CD8-positive, alpha-beta T cell (primary cell): ENCODE measurements at regions of chr1 and their contacts with region 1.

Region 1: DNA sequence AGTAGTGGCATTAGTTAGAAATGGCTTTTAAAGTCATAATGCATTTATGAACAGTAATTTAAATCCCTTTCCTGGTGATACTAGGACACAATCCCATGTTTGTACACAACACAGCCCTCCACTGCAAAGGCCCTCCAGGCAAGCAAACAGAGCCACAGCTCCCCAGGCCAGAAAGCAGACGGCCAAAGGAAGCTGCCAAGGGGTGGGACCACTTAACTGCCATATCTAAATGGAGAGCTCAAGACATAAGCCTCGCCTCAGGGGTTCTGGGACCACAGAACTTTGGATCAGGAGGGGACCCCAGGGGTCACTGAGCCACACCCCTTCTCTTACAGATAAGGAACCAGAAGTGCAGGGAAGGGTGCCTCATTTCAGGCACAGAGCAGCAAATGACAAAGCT is 189.7 kb downstream of the KCNH1 start:
- DNase-seq: no peak
- ATAC-seq: no peak
- H3K4me3 ChIP-seq: no peak overlapping the region
- H3K4me3 Mint-ChIP-seq: no peak overlapping the region
- H3K27ac ChIP-seq: no peak overlapping the region
- H3K27ac Mint-ChIP-seq: no peak overlapping the region
- H3K4me1 ChIP-seq: no peaks in the 10 kb centered on the region
- H3K4me1 Mint-ChIP-seq: peaks cover 9% of the 10 kb centered on the region
- H3K27me3 ChIP-seq: no peaks in the 10 kb centered on the region
- H3K27me3 Mint-ChIP-seq: peaks cover 6% of the 10 kb centered on the region
- CTCF ChIP-seq: no peak

Region 2: GRCh38 chr1:210407207-210407886 is 536.9 kb before region 1 on chr1:
- CTCF ChIA-PET with region 1: interaction called, 3 read pairs
- POLR2A ChIA-PET with region 1: no interaction called
- intact Hi-C with region 1: loop called (anchors 2 to 5 kb)
- DNase-seq: peak; percentile 33 to 85 (median 70)
- ATAC-seq: peak; percentile 64
- H3K4me3 ChIP-seq: no peak overlapping the region
- H3K4me3 Mint-ChIP-seq: no peak overlapping the region
- H3K27ac ChIP-seq: no peak overlapping the region
- H3K27ac Mint-ChIP-seq: no peak overlapping the region
- H3K4me1 ChIP-seq: no peaks in the 10 kb centered on the region
- H3K4me1 Mint-ChIP-seq: peaks cover 3% of the 10 kb centered on the region
- H3K27me3 ChIP-seq: no peaks in the 10 kb centered on the region
- H3K27me3 Mint-ChIP-seq: no peaks in the 10 kb centered on the region
- CTCF ChIP-seq: peak; percentile 92

Region 3: GRCh38 chr1:210912752-210913151 is 31.5 kb before region 1 on chr1:
- CTCF ChIA-PET with region 1: no interaction called
- POLR2A ChIA-PET with region 1: no interaction called
- intact Hi-C with region 1: loop called in 1 of 2 experiments (anchors 1 kb)
- DNase-seq: no peak
- ATAC-seq: no peak
- H3K4me3 ChIP-seq: no peak overlapping the region
- H3K4me3 Mint-ChIP-seq: no peak overlapping the region
- H3K27ac ChIP-seq: no peak overlapping the region
- H3K27ac Mint-ChIP-seq: no peak overlapping the region
- H3K4me1 ChIP-seq: no peaks in the 10 kb centered on the region
- H3K4me1 Mint-ChIP-seq: no peaks in the 10 kb centered on the region
- H3K27me3 ChIP-seq: no peaks in the 10 kb centered on the region
- H3K27me3 Mint-ChIP-seq: peaks cover 6% of the 10 kb centered on the region
- CTCF ChIP-seq: no peak

Region 4: DNA sequence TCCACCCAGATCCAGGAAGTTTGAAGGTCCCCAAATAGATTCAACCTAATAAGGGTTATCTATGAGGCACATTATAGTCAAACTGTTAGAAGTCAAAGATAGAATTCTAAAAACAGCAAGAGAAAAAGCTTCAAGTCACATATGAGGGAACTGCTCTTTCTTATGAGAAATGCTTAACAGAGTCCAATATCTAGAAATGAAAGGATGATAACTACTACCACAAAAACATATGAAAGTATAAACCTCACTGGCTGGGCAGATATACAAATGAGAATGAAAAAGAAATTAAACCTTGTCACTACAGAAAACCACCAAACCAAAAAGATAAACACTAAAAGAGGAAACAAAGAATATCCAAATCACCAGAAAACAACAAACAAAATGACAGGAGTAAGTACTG is 12.1 kb before region 1 on chr1:
- CTCF ChIA-PET with region 1: no interaction called
- POLR2A ChIA-PET with region 1: no interaction called
- intact Hi-C with region 1: no loop called
- DNase-seq: no peak
- ATAC-seq: no peak
- H3K4me3 ChIP-seq: no peak overlapping the region
- H3K4me3 Mint-ChIP-seq: no peak overlapping the region
- H3K27ac ChIP-seq: no peak overlapping the region
- H3K27ac Mint-ChIP-seq: no peak overlapping the region
- H3K4me1 ChIP-seq: no peaks in the 10 kb centered on the region
- H3K4me1 Mint-ChIP-seq: no peaks in the 10 kb centered on the region
- H3K27me3 ChIP-seq: peaks cover 0 to 3% of the 10 kb centered on the region in 2 experiments
- H3K27me3 Mint-ChIP-seq: peaks cover under 1% of the 10 kb centered on the region
- CTCF ChIP-seq: no peak